Caco-2 (cell line): ENCODE measurements at regions of chr1 and their contacts with region 1.

Region 1: DNA sequence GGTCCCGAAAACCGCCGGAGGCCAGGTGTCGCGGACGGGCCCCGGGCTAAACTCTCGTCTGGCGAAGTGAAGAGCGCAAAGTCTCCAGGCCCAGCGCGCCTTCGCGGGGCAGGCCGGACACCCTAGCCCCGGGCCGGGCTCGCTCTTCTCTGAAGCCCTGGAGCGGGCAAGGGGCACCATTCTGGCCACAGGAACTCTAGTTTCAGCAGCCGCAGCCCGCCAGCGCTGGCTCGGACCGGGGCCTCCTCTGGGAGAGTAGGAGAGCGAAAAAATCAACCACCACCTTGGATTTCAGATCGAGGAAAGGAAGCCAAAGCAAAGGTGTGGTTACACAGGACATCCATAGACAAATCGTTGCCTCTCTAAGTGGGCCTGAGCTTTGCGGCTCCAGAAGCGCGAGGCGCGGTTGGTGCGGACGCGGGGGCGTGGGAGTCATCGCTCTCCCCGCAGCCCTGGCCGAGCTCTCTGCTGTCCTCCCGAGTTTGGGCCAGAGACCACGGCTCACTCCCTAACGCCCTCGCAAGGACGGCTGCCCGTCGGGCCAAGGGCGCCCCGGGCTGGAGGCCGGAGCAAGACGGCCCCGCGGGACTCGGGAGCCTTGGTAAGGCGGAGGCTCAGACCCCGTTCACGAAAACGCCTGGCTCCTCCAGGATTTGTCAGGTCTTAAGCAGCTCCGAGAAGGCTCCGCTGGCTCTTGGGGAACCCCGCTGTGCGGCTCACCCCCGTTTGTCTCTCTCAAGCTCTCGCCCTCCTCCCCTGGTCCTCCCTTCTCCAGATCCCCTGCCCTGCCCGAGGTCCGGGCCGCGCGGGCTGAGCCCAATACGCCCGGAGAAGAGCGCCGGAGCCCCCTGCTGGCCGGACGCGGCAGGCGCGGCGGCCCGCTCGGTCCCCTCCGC is 132.9 kb upstream of the DPYD start:
- DNase-seq: no peak
- H3K4me3 ChIP-seq: no peak overlapping the region
- H3K4me3 Mint-ChIP-seq: no peak overlapping the region
- H3K27ac Mint-ChIP-seq: no peak overlapping the region
- H3K4me1 ChIP-seq: no peaks in the 10 kb centered on the region
- H3K4me1 Mint-ChIP-seq: peaks cover 7% of the 10 kb centered on the region
- H3K27me3 ChIP-seq: no peaks in the 10 kb centered on the region
- H3K27me3 Mint-ChIP-seq: no peaks in the 10 kb centered on the region
- CTCF ChIP-seq: no peak

Region 2: DNA sequence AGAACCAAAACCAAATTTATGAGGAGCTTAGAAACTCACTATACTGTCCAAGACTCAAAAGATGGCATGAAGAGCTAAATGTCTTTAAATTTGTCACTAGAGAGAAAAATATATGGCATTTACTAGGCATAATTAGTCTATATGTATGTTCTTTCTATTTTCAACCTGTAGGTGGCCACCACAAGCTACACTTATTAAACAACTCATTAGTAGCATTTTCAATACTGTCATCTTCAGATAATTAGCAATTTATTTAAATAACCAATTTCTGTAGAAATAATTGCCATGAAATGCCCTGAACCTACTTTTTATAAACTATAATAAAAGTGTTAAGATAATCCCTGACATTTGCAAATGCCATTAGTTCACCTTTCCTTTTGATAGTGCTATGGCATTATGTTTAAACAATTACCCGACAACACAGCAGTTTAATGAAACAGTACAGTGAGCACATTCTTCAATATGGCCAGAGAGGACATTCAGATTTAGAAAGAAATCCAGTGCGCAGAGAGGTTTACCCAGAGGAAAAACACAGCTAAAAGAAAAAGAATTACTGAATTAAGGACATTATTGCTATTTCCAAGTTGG is 809.7 kb before region 1 on chr1:
- CTCF ChIA-PET with region 1: no interaction called
- POLR2A ChIA-PET with region 1: no interaction called
- intact Hi-C with region 1: loop called (anchors 2 kb)
- DNase-seq: no peak
- H3K4me3 ChIP-seq: no peak overlapping the region
- H3K4me3 Mint-ChIP-seq: no peak overlapping the region
- H3K27ac Mint-ChIP-seq: no peak overlapping the region
- H3K4me1 ChIP-seq: no peaks in the 10 kb centered on the region
- H3K4me1 Mint-ChIP-seq: no peaks in the 10 kb centered on the region
- H3K27me3 ChIP-seq: no peaks in the 10 kb centered on the region
- H3K27me3 Mint-ChIP-seq: no peaks in the 10 kb centered on the region
- CTCF ChIP-seq: peak; percentile 10 to 13

Region 3: GRCh38 chr1:97610748-97611147 is 443.0 kb before region 1 on chr1:
- CTCF ChIA-PET with region 1: no interaction called
- POLR2A ChIA-PET with region 1: no interaction called
- intact Hi-C with region 1: loop called (anchors 5 kb)
- DNase-seq: no peak
- H3K4me3 ChIP-seq: no peak overlapping the region
- H3K4me3 Mint-ChIP-seq: no peak overlapping the region
- H3K27ac Mint-ChIP-seq: no peak overlapping the region
- H3K4me1 ChIP-seq: no peaks in the 10 kb centered on the region
- H3K4me1 Mint-ChIP-seq: no peaks in the 10 kb centered on the region
- H3K27me3 ChIP-seq: no peaks in the 10 kb centered on the region
- H3K27me3 Mint-ChIP-seq: peaks cover 2% of the 10 kb centered on the region
- CTCF ChIP-seq: no peak

Region 4: DNA sequence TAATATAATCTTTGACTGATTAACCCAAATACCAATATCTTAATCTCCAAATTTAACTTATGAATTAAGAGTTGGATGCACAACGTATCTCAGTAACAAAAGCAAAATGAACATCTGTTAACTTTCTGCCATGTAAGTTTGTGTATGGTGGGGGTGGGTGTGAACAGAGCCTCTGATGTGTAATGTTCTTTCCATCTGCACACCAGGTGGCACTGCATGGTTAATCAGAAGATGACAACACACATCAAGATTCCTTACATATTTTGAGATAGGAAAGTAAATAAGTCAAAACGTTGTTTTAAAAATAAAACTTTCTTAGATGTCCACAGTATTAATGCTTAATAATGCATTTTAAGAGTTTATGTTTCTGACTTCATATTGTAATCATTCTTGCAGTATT is 384.8 kb before region 1 on chr1:
- CTCF ChIA-PET with region 1: no interaction called
- POLR2A ChIA-PET with region 1: no interaction called
- intact Hi-C with region 1: loop called (anchors 1 kb)
- DNase-seq: peak; percentile 8 to 30
- H3K4me3 ChIP-seq: no peak overlapping the region
- H3K4me3 Mint-ChIP-seq: no peak overlapping the region
- H3K27ac Mint-ChIP-seq: no peak overlapping the region
- H3K4me1 ChIP-seq: no peaks in the 10 kb centered on the region
- H3K4me1 Mint-ChIP-seq: no peaks in the 10 kb centered on the region
- H3K27me3 ChIP-seq: no peaks in the 10 kb centered on the region
- H3K27me3 Mint-ChIP-seq: no peaks in the 10 kb centered on the region
- CTCF ChIP-seq: peak in 1 of 2 experiments; percentile 14

Region 5: DNA sequence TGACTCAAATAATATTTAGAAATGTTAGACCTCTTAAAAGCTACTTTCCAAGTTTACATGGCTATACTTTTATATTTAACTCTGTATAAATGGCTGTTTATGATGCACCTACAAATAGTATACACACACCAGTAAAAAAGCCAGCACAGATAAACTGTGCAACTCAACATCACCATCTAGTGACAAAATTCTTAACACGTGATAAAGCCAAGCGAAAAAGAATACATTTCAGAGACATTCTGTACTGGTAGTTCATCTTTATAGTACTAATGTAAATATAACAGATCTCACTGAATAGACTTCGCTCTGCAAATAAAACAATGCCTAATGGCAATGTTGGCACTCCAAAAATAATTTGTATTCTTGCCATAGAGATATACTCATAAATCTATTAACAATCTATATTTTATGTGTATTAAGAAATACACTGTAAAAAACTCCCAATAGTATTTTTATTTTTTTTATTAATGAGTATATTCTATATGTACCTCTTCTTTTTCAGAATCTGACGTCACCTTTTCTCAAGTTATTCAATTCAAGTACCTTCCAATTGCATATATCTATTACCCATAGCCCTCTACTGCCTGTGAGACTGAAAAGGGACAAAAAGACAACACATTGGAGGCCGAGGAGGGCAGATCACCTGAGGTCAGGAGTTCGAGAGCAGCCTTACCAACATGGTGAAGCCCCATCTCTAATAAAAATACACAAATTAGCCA is 233.1 kb before region 1 on chr1:
- CTCF ChIA-PET with region 1: no interaction called
- POLR2A ChIA-PET with region 1: no interaction called
- intact Hi-C with region 1: loop called (anchors 5 kb)
- DNase-seq: peak in 1 of 2 experiments; percentile 30
- H3K4me3 ChIP-seq: no peak overlapping the region
- H3K4me3 Mint-ChIP-seq: no peak overlapping the region
- H3K27ac Mint-ChIP-seq: no peak overlapping the region
- H3K4me1 ChIP-seq: peaks cover 20% of the 10 kb centered on the region
- H3K4me1 Mint-ChIP-seq: peaks cover 2% of the 10 kb centered on the region
- H3K27me3 ChIP-seq: no peaks in the 10 kb centered on the region
- H3K27me3 Mint-ChIP-seq: no peaks in the 10 kb centered on the region
- CTCF ChIP-seq: peak in 1 of 2 experiments; percentile 28

Region 6: DNA sequence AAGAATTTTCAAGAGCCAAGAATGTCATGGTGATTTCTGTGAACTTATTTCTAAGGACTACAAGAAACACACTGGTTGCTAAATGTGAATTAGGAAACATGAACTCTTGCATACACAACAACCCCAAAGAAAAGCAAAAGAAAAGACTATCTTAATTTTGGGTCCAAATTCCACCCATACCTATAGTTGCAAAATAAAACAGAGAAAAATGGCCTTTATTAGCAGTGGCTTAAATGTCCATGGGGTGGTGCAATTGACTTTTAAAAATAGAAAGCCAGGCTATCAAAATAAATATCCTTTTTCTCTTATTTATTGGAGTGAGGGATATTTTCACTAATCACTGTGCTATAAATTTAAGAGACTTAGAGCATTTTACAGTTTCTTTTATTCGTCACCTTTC is 52.0 kb before region 1 on chr1:
- CTCF ChIA-PET with region 1: no interaction called
- POLR2A ChIA-PET with region 1: no interaction called
- intact Hi-C with region 1: loop called (anchors 2 kb)
- DNase-seq: no peak
- H3K4me3 ChIP-seq: no peak overlapping the region
- H3K4me3 Mint-ChIP-seq: no peak overlapping the region
- H3K27ac Mint-ChIP-seq: no peak overlapping the region
- H3K4me1 ChIP-seq: peaks cover 7% of the 10 kb centered on the region
- H3K4me1 Mint-ChIP-seq: no peaks in the 10 kb centered on the region
- H3K27me3 ChIP-seq: no peaks in the 10 kb centered on the region
- H3K27me3 Mint-ChIP-seq: no peaks in the 10 kb centered on the region
- CTCF ChIP-seq: peak in 1 of 2 experiments; percentile 15

Region 7: GRCh38 chr1:98468111-98468717 is 414.5 kb after region 1 on chr1:
- CTCF ChIA-PET with region 1: no interaction called
- POLR2A ChIA-PET with region 1: no interaction called
- intact Hi-C with region 1: loop called (anchors 1 kb)
- DNase-seq: peak in 1 of 2 experiments; percentile 30
- H3K4me3 ChIP-seq: no peak overlapping the region
- H3K4me3 Mint-ChIP-seq: peak overlapping the region; percentile 41
- H3K27ac Mint-ChIP-seq: no peak overlapping the region
- H3K4me1 ChIP-seq: no peaks in the 10 kb centered on the region
- H3K4me1 Mint-ChIP-seq: peaks cover 21% of the 10 kb centered on the region
- H3K27me3 ChIP-seq: no peaks in the 10 kb centered on the region
- H3K27me3 Mint-ChIP-seq: no peaks in the 10 kb centered on the region
- CTCF ChIP-seq: peak; percentile 63 to 75